Mammary epithelial cell (primary cell): ENCODE measurements at regions of chrX and their contacts with region 1.

Region 1: GRCh38 chrX:53605004-53605403 is 81.5 kb downstream of the HUWE1 start:
- DNase-seq: peak; percentile 12
- H3K4me3 ChIP-seq: no peak overlapping the region
- H3K27ac ChIP-seq: no peak overlapping the region
- H3K4me1 ChIP-seq: no peaks in the 10 kb centered on the region
- H3K27me3 ChIP-seq: no peaks in the 10 kb centered on the region
- CTCF ChIP-seq: no peak

Region 2: GRCh38 chrX:53171356-53171755 is 433.6 kb before region 1 on chrX:
- CTCF ChIA-PET with region 1: no interaction called
- dilution Hi-C with region 1: no loop called
- in situ Hi-C with region 1: no loop called
- intact Hi-C with region 1: no loop called
- DNase-seq: no peak
- H3K4me3 ChIP-seq: no peak overlapping the region
- H3K27ac ChIP-seq: no peak overlapping the region
- H3K4me1 ChIP-seq: no peaks in the 10 kb centered on the region
- H3K27me3 ChIP-seq: no peaks in the 10 kb centered on the region
- CTCF ChIP-seq: no peak

Region 3: GRCh38 chrX:53654376-53654775 is 49.4 kb after region 1 on chrX:
- CTCF ChIA-PET with region 1: no interaction called
- dilution Hi-C with region 1: loop called (anchors 5 kb)
- in situ Hi-C with region 1: no loop called
- intact Hi-C with region 1: no loop called
- DNase-seq: no peak
- H3K4me3 ChIP-seq: no peak overlapping the region
- H3K27ac ChIP-seq: no peak overlapping the region
- H3K4me1 ChIP-seq: no peaks in the 10 kb centered on the region
- H3K27me3 ChIP-seq: no peaks in the 10 kb centered on the region
- CTCF ChIP-seq: no peak